Activated CD8-positive, alpha-beta memory T cell treated with anti-CD3 and anti-CD28 coated beads, Interleukin-2, amount 10 ng/mL, durations not matched to agents 7 days and 5 days (primary cell): ENCODE measurements at regions of chr12 and their contacts with region 1.

Region 1: GRCh38 chr12:6613776-6614512 is 6.8 kb upstream of the CHD4 start:
- DNase-seq: peak; percentile 86
- ATAC-seq: peak; percentile 46
- H3K4me3 Mint-ChIP-seq: no peak overlapping the region
- H3K27ac Mint-ChIP-seq: peak overlapping the region; percentile 70
- H3K4me1 Mint-ChIP-seq: peaks cover 42% of the 10 kb centered on the region
- H3K27me3 Mint-ChIP-seq: no peaks in the 10 kb centered on the region

Region 2: DNA sequence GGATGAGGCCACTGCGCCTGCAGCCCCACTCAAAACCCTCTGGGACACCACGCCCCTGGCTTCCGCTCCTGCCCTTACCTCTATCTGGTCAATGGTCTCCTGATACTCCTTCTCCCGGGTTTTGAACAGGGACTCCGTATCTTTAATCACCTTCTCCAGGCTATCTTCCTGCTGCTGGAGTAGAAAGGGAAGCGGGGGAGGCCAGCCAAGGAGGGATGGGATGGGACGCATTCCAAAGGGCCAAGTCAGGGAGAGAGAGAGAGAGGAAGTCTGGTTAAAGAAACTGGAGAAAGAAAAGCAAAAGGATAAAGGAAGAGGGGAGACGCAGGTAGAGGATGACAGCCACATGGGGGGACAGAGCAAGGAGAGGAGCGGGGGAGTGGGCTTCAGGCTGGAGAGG is 66.0 kb before region 1 on chr12:
- CTCF ChIA-PET with region 1: no interaction called
- DNase-seq: no peak
- ATAC-seq: no peak
- H3K4me3 Mint-ChIP-seq: no peak overlapping the region
- H3K27ac Mint-ChIP-seq: no peak overlapping the region
- H3K4me1 Mint-ChIP-seq: peaks cover 15% of the 10 kb centered on the region
- H3K27me3 Mint-ChIP-seq: no peaks in the 10 kb centered on the region

Region 3: DNA sequence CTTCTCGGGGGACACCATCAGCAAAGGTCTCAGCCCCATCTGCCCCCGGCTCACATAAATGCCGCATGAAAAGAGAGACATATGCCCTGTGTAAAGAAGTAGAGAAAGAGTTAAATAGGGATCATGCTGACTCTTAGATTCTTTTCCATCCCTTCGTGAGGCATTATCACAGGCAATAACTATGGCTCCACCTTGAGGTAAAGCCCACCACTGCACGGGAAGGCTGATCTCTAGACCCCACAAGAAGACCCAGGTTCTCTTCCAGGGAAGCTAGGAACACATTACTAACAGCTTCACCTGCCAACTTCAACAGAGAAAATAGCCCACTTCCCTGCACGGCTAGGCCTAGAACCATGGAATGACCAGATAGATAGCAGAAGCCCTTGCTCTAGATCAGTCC is 31.7 kb before region 1 on chr12:
- CTCF ChIA-PET with region 1: no interaction called
- DNase-seq: no peak
- ATAC-seq: no peak
- H3K4me3 Mint-ChIP-seq: no peak overlapping the region
- H3K27ac Mint-ChIP-seq: no peak overlapping the region
- H3K4me1 Mint-ChIP-seq: peaks cover 8% of the 10 kb centered on the region
- H3K27me3 Mint-ChIP-seq: no peaks in the 10 kb centered on the region

Region 4: GRCh38 chr12:6688999-6689882 is 75.3 kb after region 1 on chr12 and contains the start of gene ZNF384:
- CTCF ChIA-PET with region 1: interaction called, 36 read pairs
- DNase-seq: peak; percentile 99
- ATAC-seq: peak; percentile 84
- H3K4me3 Mint-ChIP-seq: peak within 1 kb of the TSS; percentile 96
- H3K27ac Mint-ChIP-seq: peak within 1 kb of the TSS; percentile 96
- H3K4me1 Mint-ChIP-seq: peaks cover 44% of the 10 kb centered on the region
- H3K27me3 Mint-ChIP-seq: no peaks in the 10 kb centered on the region
- total RNA-seq, gene ZNF384: 76.3 to 76.4 TPM